H1 (cell line): ENCODE measurements at regions of chr11 and their contacts with region 1.

Region 1: DNA sequence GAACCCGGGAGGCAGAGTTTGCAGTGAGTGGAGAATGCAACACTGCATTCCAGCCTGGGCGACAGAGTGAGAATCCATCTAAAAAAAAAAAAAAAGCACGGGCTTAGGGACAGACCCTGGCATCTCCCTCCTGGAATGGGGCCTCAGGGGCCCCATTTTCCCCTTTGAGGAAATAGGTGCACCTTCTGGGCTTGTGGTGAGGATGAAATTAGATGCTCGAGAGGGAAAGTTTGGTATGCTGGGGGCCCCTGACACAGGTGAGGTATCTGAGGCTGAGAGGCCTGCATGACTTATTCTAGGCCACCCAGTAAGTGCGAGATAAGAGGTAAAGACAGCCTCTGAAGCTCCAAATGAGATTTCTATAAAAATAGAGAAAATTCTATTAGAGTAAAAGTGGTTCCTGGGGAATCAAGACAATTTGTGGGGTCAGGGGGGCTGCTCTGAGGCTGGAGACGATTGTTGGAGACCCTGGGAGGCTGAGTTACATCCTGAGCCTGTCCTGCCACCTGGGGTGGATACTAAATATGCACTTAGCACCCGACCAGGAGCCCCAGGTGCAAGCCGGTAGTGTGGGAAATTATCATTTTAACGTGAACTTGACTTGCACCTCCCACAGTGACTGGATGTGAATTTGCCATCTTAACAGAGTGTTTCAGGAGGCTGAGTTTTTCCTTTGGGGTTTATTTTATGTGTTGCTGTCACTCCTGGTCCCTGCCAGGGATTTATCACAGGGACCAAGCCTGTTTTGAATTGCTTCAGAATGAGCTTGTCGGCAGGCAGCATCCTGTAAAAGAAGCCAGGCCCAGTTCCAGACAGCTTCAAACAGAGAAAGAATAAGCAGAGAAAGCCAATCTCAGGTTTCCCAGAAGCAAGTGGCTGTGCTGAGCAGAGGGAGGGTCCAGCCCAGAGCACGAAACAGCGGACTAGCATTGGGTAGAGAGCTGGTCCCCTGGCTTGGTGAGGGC is 48.4 kb upstream of the TSKU start:
- DNase-seq: no peak
- H3K4me3 ChIP-seq: no peak overlapping the region
- H3K27ac ChIP-seq: no peak overlapping the region
- H3K4me1 ChIP-seq: peaks cover 8 to 17% (median 13%) of the 10 kb centered on the region in 4 experiments
- H3K27me3 ChIP-seq: no peaks in the 10 kb centered on the region
- CTCF ChIP-seq: no peak
- EP300 ChIP-seq: no peak
- POLR2A ChIP-seq: no peak
- RAD21 ChIP-seq: no peak

Region 2: GRCh38 chr11:76200006-76200940 is 534.5 kb before region 1 on chr11:
- CTCF ChIA-PET with region 1: no interaction called
- POLR2A ChIA-PET with region 1: no interaction called
- DNase-seq: no peak
- H3K4me3 ChIP-seq: no peak overlapping the region
- H3K27ac ChIP-seq: no peak overlapping the region
- H3K4me1 ChIP-seq: no peaks in the 10 kb centered on the region
- H3K27me3 ChIP-seq: peaks cover 11 to 19% (median 15%) of the 10 kb centered on the region in 4 experiments
- CTCF ChIP-seq: no peak
- EP300 ChIP-seq: no peak
- POLR2A ChIP-seq: no peak
- RAD21 ChIP-seq: no peak

Region 3: GRCh38 chr11:76759092-76759491 is 24.4 kb after region 1 on chr11:
- CTCF ChIA-PET with region 1: interaction called, 10 read pairs
- POLR2A ChIA-PET with region 1: no interaction called
- DNase-seq: no peak
- H3K4me3 ChIP-seq: no peak overlapping the region
- H3K27ac ChIP-seq: no peak overlapping the region
- H3K4me1 ChIP-seq: peaks cover 0 to 8% (median 2%) of the 10 kb centered on the region in 4 experiments; a peak in 2 of 7 replicates
- H3K27me3 ChIP-seq: 0 out of 7 replicates have a peak, but pooled peaks cover 0 to 3% (median 0%) of the 10 kb centered on the region in 4 experiments
- CTCF ChIP-seq: no peak
- EP300 ChIP-seq: no peak
- POLR2A ChIP-seq: no peak
- RAD21 ChIP-seq: no peak

Region 4: GRCh38 chr11:76788661-76789439 is 54.1 kb after region 1 on chr11:
- CTCF ChIA-PET with region 1: interaction called, 17 read pairs
- POLR2A ChIA-PET with region 1: interaction called, 6 read pairs
- DNase-seq: no peak
- H3K4me3 ChIP-seq: no peak overlapping the region
- H3K27ac ChIP-seq: no peak overlapping the region
- H3K4me1 ChIP-seq: peaks cover 20 to 32% (median 30%) of the 10 kb centered on the region in 4 experiments
- H3K27me3 ChIP-seq: no peaks in the 10 kb centered on the region
- CTCF ChIP-seq: no peak
- EP300 ChIP-seq: no peak
- POLR2A ChIP-seq: no peak
- RAD21 ChIP-seq: no peak

Region 5: DNA sequence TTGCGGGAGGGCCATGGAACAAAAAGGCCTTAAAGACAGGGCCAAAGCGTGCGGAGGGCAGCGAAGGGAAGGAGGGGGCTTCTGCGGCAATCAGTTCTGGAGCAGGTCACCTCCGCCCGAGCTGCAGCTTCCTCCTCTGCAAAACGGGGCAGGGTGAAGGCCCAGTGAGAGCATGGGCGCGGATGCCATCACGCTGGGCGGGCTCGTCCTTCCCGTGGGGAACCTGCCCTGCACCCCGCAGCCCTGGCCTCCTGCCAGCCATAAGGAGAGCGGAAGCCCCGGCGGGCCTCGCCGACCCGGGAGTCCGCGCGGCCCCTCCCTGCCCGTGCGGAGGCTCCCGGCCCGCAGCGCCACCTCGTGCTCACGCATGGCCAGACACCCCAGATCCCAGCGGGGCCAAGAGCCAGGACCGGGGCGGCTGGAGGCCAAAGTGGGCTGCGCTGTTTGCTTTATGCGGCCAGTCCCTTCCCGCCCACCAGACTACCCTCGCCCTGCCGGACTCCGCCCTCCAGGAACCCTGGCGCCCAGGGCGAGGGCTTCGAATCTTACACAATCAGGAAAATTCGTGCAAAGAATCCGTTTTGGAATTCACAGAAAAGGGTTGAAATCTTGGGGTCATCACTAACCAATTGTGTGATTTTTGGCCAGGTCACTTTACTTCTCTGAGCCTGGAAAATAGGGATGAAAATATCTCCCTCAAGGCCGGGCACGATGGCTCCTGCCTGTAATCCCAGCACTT is 64.5 kb after region 1 on chr11:
- CTCF ChIA-PET with region 1: interaction called, 88 read pairs
- POLR2A ChIA-PET with region 1: no interaction called
- DNase-seq: peak in 1 of 2 experiments; percentile 96
- H3K4me3 ChIP-seq: peak overlapping the region in 3 of 4 experiments; percentile 36 to 49 (median 48); a peak in 4 of 8 replicates
- H3K27ac ChIP-seq: no peak overlapping the region
- H3K4me1 ChIP-seq: peaks cover 3 to 16% (median 7%) of the 10 kb centered on the region in 4 experiments; a peak in 6 of 7 replicates
- H3K27me3 ChIP-seq: no peaks in the 10 kb centered on the region; a peak in 1 of 7 replicates
- CTCF ChIP-seq: peak; percentile 79 to 93 (median 82)
- EP300 ChIP-seq: no peak
- POLR2A ChIP-seq: no peak
- RAD21 ChIP-seq: peak; percentile 76 to 89

Region 6: GRCh38 chr11:76807206-76807875 is 72.6 kb after region 1 on chr11:
- CTCF ChIA-PET with region 1: interaction called, 88 read pairs
- POLR2A ChIA-PET with region 1: no interaction called
- DNase-seq: peak in 1 of 2 experiments; percentile 98
- H3K4me3 ChIP-seq: no peak overlapping the region
- H3K27ac ChIP-seq: no peak overlapping the region
- H3K4me1 ChIP-seq: peaks cover 0 to 4% (median 2%) of the 10 kb centered on the region in 4 experiments; a peak in 2 of 7 replicates
- H3K27me3 ChIP-seq: no peaks in the 10 kb centered on the region; a peak in 1 of 7 replicates
- CTCF ChIP-seq: peak; percentile 80 to 94 (median 87)
- EP300 ChIP-seq: no peak
- POLR2A ChIP-seq: no peak
- RAD21 ChIP-seq: peak; percentile 67 to 70

Region 7: GRCh38 chr11:76835928-76836612 is 101.3 kb after region 1 on chr11:
- CTCF ChIA-PET with region 1: interaction called, 19 read pairs
- POLR2A ChIA-PET with region 1: interaction called, 4 read pairs
- DNase-seq: no peak
- H3K4me3 ChIP-seq: no peak overlapping the region
- H3K27ac ChIP-seq: no peak overlapping the region
- H3K4me1 ChIP-seq: 0 out of 7 replicates have a peak, but pooled peaks cover 0 to 4% (median 0%) of the 10 kb centered on the region in 4 experiments
- H3K27me3 ChIP-seq: no peaks in the 10 kb centered on the region
- CTCF ChIP-seq: no peak
- EP300 ChIP-seq: no peak
- POLR2A ChIP-seq: no peak
- RAD21 ChIP-seq: no peak

Region 8: DNA sequence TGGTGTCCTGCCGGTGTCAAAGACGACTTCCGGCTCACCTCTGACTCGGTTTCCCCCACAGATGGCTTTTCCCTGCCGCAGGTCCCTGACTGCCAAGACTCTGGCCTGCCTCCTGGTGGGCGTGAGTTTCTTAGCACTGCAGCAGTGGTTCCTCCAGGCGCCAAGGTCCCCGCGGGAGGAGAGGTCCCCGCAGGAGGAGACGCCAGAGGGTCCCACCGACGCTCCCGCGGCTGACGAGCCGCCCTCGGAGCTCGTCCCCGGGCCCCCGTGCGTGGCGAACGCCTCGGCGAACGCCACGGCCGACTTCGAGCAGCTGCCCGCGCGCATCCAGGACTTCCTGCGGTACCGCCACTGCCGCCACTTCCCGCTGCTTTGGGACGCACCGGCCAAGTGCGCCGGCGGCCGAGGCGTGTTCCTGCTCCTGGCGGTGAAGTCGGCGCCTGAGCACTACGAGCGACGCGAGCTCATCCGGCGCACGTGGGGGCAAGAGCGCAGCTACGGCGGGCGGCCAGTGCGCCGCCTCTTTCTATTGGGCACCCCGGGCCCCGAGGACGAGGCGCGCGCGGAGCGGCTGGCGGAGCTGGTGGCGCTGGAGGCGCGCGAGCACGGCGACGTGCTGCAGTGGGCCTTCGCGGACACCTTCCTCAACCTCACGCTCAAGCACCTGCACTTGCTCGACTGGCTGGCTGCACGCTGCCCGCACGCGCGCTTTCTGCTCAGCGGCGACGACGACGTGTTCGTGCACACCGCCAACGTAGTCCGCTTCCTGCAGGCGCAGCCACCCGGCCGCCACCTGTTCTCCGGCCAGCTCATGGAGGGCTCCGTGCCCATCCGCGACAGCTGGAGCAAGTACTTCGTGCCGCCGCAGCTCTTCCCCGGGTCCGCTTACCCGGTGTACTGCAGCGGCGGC is 305.0 kb after region 1 on chr11:
- CTCF ChIA-PET with region 1: interaction called, 14 read pairs
- POLR2A ChIA-PET with region 1: no interaction called
- DNase-seq: peak in 1 of 2 experiments; percentile 86
- H3K4me3 ChIP-seq: peak overlapping the region; percentile 9 to 51 (median 17); a peak in 5 of 8 replicates
- H3K27ac ChIP-seq: no peak overlapping the region
- H3K4me1 ChIP-seq: peaks cover 0 to 9% (median 4%) of the 10 kb centered on the region in 4 experiments; a peak in 5 of 7 replicates
- H3K27me3 ChIP-seq: peaks cover 14 to 34% (median 30%) of the 10 kb centered on the region in 4 experiments
- CTCF ChIP-seq: peak; percentile 71 to 79 (median 72)
- EP300 ChIP-seq: no peak
- POLR2A ChIP-seq: no peak
- RAD21 ChIP-seq: peak; percentile 54 to 70; a peak in 3 of 4 replicates